Cardiac septum (tissue), 1 donor: ENCODE measurements at regions of chr11 and their contacts with region 1.

Region 1: GRCh38 chr11:114280696-114281095 is 15.5 kb upstream of the NNMT start:
- DNase-seq: no peak

Region 2: GRCh38 chr11:114243461-114244372 is 37.0 kb before region 1 on chr11:
- intact Hi-C with region 1: no loop called
- DNase-seq: peak; percentile 85

Region 3: DNA sequence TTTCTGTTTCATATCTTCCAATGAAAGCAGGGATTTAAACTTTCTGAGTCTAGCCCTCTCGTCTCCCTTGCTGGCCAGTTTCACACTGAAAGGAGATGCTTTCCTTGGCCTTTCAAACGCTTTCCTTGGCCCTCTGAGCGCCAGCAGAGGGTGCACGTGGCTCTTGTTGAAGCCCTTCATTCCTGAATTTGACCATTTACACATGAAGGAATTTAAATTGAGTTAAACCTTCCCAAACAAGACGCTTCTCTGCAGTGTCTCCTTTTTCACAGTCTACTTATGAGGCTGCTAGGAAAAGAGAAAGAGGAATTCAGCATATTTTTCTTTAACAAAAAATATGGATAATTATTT is 37.1 kb after region 1 on chr11:
- intact Hi-C with region 1: loop called (anchors 5 kb)
- DNase-seq: no peak

Region 4: DNA sequence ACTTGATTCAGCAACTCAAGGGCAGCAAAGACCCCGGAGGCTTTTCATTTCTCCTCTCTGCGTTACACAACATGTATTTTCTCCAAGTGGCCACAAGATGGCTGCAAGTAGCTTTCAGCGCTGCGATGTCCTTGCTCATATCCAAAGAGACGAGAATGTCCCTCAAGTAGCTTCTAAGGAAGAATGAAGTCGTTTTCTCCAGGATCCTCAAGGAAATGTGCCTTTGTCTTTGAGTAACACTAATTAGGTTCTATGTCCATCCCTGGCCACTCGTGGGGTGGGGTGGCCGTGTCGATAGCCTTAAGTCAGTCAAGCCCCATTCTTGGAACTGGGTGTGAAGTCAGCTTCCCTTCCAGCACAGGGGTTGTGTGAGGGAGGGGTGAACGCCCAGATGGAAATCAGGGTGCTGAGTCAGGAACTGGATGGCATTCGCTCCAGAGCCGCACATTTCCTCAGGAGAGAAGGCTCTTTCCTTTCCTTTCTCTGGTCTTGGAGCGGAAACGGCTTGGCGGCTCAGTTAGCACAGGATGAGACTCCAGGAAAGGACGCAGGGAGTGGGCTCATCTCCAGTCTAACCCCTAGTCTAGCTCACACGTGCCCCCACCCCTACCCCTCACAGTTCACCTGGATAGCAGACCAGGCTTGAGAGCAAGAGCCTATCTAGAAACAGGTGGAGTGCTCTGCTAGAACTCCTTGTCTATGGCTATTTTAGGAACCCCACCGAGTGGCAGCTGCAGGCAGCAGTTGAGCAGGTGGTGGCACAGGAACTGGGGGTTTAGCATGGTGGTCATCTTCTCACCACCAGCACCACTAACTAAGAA is 59.8 kb after region 1 on chr11:
- intact Hi-C with region 1: loop called (anchors 5 kb)
- DNase-seq: no peak

Region 5: GRCh38 chr11:114762408-114762807 is 481.7 kb after region 1 on chr11:
- intact Hi-C with region 1: loop called (anchors 1 kb)
- DNase-seq: no peak